Activated B cell treated with CpG ODN at 0.5 μM for 24 hours (primary cell): ENCODE measurements at regions of chr6 and their contacts with region 1.

Region 1: GRCh38 chr6:815348-815738 is 122.4 kb upstream of the EXOC2 start:
- DNase-seq: no peak
- ATAC-seq: no peak
- H3K4me3 Mint-ChIP-seq: no peak overlapping the region
- H3K27ac Mint-ChIP-seq: no peak overlapping the region
- H3K4me1 Mint-ChIP-seq: peaks cover 38% of the 10 kb centered on the region
- H3K27me3 Mint-ChIP-seq: no peaks in the 10 kb centered on the region
- CTCF ChIP-seq: no peak

Region 2: GRCh38 chr6:897528-898207 is 82.3 kb after region 1 on chr6:
- CTCF ChIA-PET with region 1: no interaction called
- POLR2A ChIA-PET with region 1: no interaction called
- intact Hi-C with region 1: loop called (anchors 5 kb)
- DNase-seq: no peak
- ATAC-seq: peak; percentile 76
- H3K4me3 Mint-ChIP-seq: peak overlapping the region; percentile 37
- H3K27ac Mint-ChIP-seq: peak overlapping the region; percentile 77
- H3K4me1 Mint-ChIP-seq: peaks cover 13% of the 10 kb centered on the region
- H3K27me3 Mint-ChIP-seq: peaks cover 4% of the 10 kb centered on the region
- CTCF ChIP-seq: no peak